ENCODE measurements at regions of chr3 and their contacts with region 1.

Region 1: DNA sequence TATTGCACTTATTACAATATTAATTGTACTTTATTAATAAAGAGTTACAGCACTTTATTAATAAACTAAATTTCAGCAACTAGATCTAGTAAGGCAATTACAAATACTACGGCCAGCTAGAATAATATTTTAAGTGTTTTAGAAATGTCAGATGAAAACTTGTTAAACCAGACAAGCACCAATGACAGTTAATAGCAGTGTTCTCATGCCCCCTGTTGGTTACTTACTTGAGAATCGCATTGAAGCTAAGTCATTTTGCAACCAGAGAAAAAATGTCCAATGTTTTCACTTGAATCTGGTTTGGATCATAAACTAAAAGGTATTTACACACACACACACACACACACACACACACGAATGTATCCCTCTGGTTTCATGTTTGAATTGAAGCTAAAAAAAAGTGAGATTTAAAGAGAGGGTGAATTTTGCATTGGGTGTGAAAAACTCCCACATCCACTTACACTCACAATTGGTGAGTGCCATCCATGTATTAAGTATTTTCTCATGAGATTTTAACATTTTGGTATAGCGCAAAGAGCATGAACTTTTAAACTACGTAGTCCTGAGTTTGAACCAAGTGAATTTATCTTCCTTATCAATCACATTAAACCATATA is 347.7 kb downstream of the ZBBX start:
- DNase-seq: peak; percentile 36
- H3K4me3 ChIP-seq: no peak overlapping the region
- H3K27ac ChIP-seq: no peak overlapping the region
- H3K4me1 ChIP-seq: no peaks in the 10 kb centered on the region
- H3K27me3 ChIP-seq: peaks cover 2% of the 10 kb centered on the region
- CTCF ChIP-seq: peak; percentile 51 to 70

Region 2: GRCh38 chr3:165624761-165625160 is 1407.6 kb before region 1 on chr3:
- CTCF ChIA-PET with region 1: no interaction called
- dilution Hi-C with region 1: no loop called
- in situ Hi-C with region 1: no loop called
- intact Hi-C with region 1: loop called (anchors 10 kb)
- DNase-seq: no peak
- H3K4me3 ChIP-seq: no peak overlapping the region
- H3K27ac ChIP-seq: no peak overlapping the region
- H3K4me1 ChIP-seq: no peaks in the 10 kb centered on the region
- H3K27me3 ChIP-seq: no peaks in the 10 kb centered on the region
- CTCF ChIP-seq: peak; percentile 60 to 71

Region 3: DNA sequence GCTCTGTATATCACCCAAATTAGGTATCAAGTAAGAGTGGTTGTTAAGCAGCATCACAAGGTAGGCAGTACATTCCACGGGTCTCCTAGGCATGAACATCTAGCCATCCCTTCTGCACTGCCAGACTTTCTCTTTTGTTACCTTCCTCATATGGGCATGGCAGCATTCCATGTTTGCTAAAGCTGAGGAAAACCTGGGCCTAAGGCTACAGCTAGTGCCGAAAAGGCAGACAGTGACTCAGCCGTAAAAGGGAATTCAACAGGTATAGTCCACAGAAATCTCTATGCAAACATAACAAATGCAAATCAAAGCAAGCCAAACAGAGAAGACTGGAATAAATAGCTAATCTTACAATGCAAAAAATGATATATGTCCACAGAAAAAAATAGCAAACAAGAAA is 297.6 kb before region 1 on chr3:
- CTCF ChIA-PET with region 1: no interaction called
- dilution Hi-C with region 1: no loop called
- in situ Hi-C with region 1: no loop called
- intact Hi-C with region 1: no loop called
- DNase-seq: no peak
- H3K4me3 ChIP-seq: no peak overlapping the region
- H3K27ac ChIP-seq: no peak overlapping the region
- H3K4me1 ChIP-seq: no peaks in the 10 kb centered on the region
- H3K27me3 ChIP-seq: no peaks in the 10 kb centered on the region
- CTCF ChIP-seq: no peak

Region 4: DNA sequence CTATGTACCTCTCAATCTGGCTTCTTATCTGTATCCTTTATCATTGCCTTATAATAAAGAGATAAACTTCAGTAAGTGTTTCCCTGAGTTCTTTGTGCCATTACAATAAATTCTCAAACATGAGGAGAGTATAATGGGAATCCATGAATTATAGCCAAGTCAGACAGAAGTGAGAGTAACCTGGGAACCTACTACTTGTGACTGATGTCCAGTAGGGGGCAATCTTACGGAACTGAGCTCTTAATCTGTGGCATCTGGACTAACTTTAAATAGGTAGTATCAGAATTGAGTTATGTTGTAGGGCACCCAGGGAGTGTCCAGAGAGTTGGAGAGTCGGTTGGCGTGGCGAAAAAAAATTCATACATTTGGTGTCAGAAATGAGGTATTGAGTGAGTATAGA is 194.8 kb before region 1 on chr3:
- CTCF ChIA-PET with region 1: no interaction called
- dilution Hi-C with region 1: no loop called
- in situ Hi-C with region 1: no loop called
- intact Hi-C with region 1: loop called (anchors 5 kb)
- DNase-seq: peak; percentile 1
- H3K4me3 ChIP-seq: no peak overlapping the region
- H3K27ac ChIP-seq: no peak overlapping the region
- H3K4me1 ChIP-seq: no peaks in the 10 kb centered on the region
- H3K27me3 ChIP-seq: no peaks in the 10 kb centered on the region
- CTCF ChIP-seq: peak; percentile 53 to 55

Region 5: GRCh38 chr3:167078070-167078622 is 45.8 kb after region 1 on chr3:
- CTCF ChIA-PET with region 1: no interaction called
- dilution Hi-C with region 1: no loop called
- in situ Hi-C with region 1: no loop called
- intact Hi-C with region 1: no loop called
- DNase-seq: no peak
- H3K4me3 ChIP-seq: no peak overlapping the region
- H3K27ac ChIP-seq: no peak overlapping the region
- H3K4me1 ChIP-seq: no peaks in the 10 kb centered on the region
- H3K27me3 ChIP-seq: no peaks in the 10 kb centered on the region
- CTCF ChIP-seq: no peak